Endothelial cell of umbilical vein (primary cell): ENCODE measurements at regions of chr16 and their contacts with region 1.

Region 1: GRCh38 chr16:29700253-29700987 is 21.4 kb downstream of the QPRT start:
- DNase-seq: peak; percentile 92
- H3K4me3 ChIP-seq: no peak overlapping the region
- H3K27ac ChIP-seq: no peak overlapping the region
- H3K4me1 ChIP-seq: peaks cover 5% of the 10 kb centered on the region
- H3K27me3 ChIP-seq: peaks cover 0 to 1% of the 10 kb centered on the region in 2 experiments
- CTCF ChIP-seq: peak; percentile 82 to 85
- POLR2A ChIP-seq: no peak

Region 2: DNA sequence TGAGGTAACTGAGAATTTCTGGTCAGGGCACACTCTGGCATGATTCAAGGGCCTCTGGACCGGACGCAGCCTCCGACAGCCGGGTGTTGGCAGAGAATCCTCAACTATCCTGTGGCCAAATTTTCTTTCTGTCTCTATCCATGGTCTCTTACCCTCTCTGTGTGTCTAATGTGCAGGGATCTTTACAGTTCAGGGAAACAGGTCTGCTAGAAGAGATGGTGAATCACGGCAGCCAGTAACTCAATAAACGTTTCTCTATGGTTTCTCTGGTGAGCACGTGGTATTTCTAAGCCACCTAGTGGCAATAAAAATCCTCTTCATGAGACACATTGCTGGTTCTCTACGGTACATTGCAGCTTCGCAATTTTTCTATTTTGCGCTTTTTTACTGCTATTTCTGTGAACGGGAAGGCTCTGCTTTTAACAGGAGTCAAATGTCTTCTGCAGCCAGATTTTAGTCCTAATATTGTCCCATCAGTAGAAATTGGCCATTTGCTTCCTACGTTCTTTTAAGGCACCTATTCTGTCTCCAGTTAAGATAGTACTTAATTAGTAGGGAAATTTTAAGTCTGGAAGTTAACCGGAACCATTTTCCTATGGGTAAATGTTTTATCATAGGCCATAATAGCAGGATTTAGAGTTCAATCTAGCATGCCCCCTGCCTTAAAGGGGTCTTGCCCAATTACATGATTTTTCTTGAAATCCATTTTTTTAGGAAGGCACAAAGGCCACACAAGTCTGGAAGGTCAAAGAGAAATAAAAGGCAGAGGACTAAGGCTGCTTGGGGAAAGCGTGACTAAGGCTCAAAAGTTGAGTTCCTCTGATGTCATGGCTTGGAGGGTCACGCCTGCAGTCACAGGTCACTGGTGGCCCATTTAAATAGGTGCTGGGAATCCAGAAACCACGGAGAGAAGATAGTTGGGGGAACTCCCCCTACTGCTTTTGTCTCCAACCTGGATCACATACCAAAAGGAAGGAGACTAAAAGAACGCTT is 10.1 kb after region 1 on chr16:
- CTCF ChIA-PET with region 1: interaction called, 28 read pairs
- POLR2A ChIA-PET with region 1: no interaction called
- dilution Hi-C with region 1: no loop called
- intact Hi-C with region 1: no loop called
- DNase-seq: peak; percentile 60
- H3K4me3 ChIP-seq: no peak overlapping the region
- H3K27ac ChIP-seq: peak overlapping the region; percentile 40
- H3K4me1 ChIP-seq: peaks cover 2% of the 10 kb centered on the region
- H3K27me3 ChIP-seq: peaks cover 0 to 3% of the 10 kb centered on the region in 2 experiments
- CTCF ChIP-seq: peak; percentile 41 to 53
- POLR2A ChIP-seq: no peak

Region 3: GRCh38 chr16:29745853-29746345 is 45.5 kb after region 1 on chr16 and contains the start of gene C16orf54:
- CTCF ChIA-PET with region 1: no interaction called
- POLR2A ChIA-PET with region 1: no interaction called
- dilution Hi-C with region 1: no loop called
- intact Hi-C with region 1: loop called (anchors 1 kb)
- DNase-seq: no peak
- H3K4me3 ChIP-seq: no peak within 1 kb of the TSS
- H3K27ac ChIP-seq: no peak within 1 kb of the TSS
- H3K4me1 ChIP-seq: no peaks in the 10 kb centered on the region
- H3K27me3 ChIP-seq: no peaks in the 10 kb centered on the region
- CTCF ChIP-seq: no peak
- POLR2A ChIP-seq: no peak
- total RNA-seq, gene C16orf54: not detected in 2 replicates

Region 4: DNA sequence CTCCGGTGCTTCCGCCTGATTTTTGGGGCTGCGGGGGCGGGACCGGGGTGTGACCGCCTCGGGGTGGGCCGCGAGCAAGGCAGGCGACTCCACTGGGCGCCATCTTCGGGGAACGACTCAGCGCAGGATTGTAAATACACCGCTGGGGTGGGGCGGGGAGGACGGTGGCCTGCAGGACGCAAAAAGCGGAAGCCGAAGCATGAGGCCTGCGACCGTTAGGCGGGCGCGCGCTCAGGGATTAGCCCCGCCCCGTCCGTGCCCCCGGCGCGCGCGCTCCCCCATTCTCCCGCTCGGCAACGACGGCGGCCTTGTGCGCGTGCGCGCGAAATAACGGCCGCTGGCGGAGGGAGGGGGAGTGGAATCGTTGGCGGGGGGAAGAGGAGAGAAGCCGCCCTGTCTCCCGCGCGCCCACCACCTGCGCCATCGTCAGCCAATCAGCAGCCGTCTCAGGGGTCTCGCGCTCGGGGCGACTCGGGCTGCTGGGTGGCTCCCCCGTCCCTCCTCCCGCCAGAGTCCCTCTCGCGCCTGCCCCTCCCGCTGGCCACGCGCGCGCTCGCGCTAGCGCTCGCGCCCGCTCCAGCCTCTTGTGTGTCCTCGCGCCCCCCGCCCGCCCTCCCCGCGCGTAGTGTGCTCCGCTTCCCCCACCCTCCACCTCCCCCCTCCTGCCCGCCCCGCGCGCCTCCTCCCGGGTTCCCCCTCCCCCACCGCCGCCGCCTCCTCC is 105.1 kb after region 1 on chr16:
- CTCF ChIA-PET with region 1: interaction called, 8 read pairs
- POLR2A ChIA-PET with region 1: no interaction called
- dilution Hi-C with region 1: no loop called
- intact Hi-C with region 1: loop called (anchors 5 kb)
- DNase-seq: peak; percentile 97
- H3K4me3 ChIP-seq: peak overlapping the region; percentile 52 to 61 (median 58)
- H3K27ac ChIP-seq: peak overlapping the region; percentile 68
- H3K4me1 ChIP-seq: peaks cover 30% of the 10 kb centered on the region
- H3K27me3 ChIP-seq: no peaks in the 10 kb centered on the region
- CTCF ChIP-seq: no peak
- POLR2A ChIP-seq: peak; percentile 72

Region 5: DNA sequence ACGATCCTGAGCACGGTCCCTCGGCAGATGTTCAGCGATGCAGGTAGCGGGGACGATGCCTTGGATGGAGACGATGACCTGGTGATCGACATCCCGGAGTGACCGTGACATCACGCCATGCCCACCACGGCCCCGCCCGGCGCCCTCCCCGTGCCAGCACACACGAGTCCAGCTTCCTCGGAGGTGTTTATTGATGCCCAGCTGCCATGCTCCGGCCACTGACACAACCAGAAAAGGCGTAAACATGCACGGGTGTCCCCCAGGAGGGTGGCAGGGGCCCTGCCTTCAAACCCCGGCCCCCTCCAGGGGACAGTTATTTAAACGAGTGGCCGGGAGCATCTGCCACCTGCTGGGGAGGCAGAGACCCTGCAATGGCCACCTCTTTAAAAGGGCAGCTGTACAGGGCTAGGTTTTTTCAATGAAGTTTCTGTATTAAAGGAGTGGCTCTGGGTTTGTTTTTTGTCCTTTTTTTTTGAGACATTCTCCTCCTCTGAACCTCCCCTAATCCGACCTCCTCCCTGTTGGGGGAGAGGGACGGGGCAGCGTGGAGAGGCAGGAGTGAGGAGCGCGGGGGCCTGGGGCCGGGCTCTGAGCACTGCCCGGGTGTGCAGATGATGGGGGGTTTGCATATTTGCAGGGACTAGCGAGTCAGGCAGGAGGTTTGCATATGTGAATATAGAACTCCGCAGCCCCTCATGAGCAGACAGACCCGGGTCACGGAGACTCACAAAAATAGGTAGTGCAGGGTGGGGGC is 305.1 kb after region 1 on chr16:
- CTCF ChIA-PET with region 1: interaction called, 26 read pairs
- POLR2A ChIA-PET with region 1: no interaction called
- dilution Hi-C with region 1: no loop called
- intact Hi-C with region 1: no loop called
- DNase-seq: peak; percentile 11
- H3K4me3 ChIP-seq: no peak overlapping the region
- H3K27ac ChIP-seq: no peak overlapping the region
- H3K4me1 ChIP-seq: no peaks in the 10 kb centered on the region
- H3K27me3 ChIP-seq: peaks cover 9 to 12% of the 10 kb centered on the region in 2 experiments
- CTCF ChIP-seq: peak; percentile 73 to 88
- POLR2A ChIP-seq: no peak